ENCODE measurements at regions of chr1 and their contacts with region 1.

Region 1: GRCh38 chr1:91529856-91530255 is 29.2 kb downstream of the CDC7 start:
- DNase-seq: no peak
- H3K4me3 ChIP-seq: no peak overlapping the region
- H3K27ac ChIP-seq: no peak overlapping the region
- H3K4me1 ChIP-seq: no peaks in the 10 kb centered on the region
- H3K27me3 ChIP-seq: no peaks in the 10 kb centered on the region
- CTCF ChIP-seq: peak in 1 of 4 experiments; percentile 42
- POLR2A ChIP-seq: no peak

Region 2: DNA sequence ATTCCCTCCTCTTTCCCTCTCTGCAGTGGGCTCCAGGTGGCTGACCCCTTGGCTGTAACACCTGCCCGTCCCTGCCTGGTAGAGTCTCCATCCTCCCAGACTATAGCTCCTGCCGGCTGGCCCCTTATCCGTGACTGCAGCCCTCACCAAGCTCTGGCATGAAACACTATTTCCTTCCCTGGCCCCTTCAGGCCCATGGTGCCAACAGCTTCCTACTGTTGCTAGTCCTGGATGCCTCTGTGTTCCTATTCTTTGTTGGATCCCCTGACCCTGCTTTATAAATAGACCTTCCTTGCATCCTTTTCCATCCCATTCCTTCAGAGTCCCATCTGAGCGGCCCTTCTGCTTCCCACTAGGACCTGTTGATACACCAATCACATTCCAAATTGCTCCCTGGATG is 1340.0 kb before region 1 on chr1:
- intact Hi-C with region 1: no loop called
- DNase-seq: no peak
- H3K4me3 ChIP-seq: no peak overlapping the region
- H3K27ac ChIP-seq: no peak overlapping the region
- H3K4me1 ChIP-seq: no peaks in the 10 kb centered on the region
- H3K27me3 ChIP-seq: no peaks in the 10 kb centered on the region
- CTCF ChIP-seq: no peak
- POLR2A ChIP-seq: no peak

Region 3: GRCh38 chr1:91244737-91245136 is 285.1 kb before region 1 on chr1:
- intact Hi-C with region 1: no loop called
- DNase-seq: no peak
- H3K4me3 ChIP-seq: no peak overlapping the region
- H3K27ac ChIP-seq: no peak overlapping the region
- H3K4me1 ChIP-seq: no peaks in the 10 kb centered on the region
- H3K27me3 ChIP-seq: no peaks in the 10 kb centered on the region
- CTCF ChIP-seq: no peak
- POLR2A ChIP-seq: no peak

Region 4: GRCh38 chr1:91700332-91700731 is 170.5 kb after region 1 on chr1:
- intact Hi-C with region 1: loop called (anchors 10 kb)
- DNase-seq: no peak
- H3K4me3 ChIP-seq: no peak overlapping the region
- H3K27ac ChIP-seq: no peak overlapping the region
- H3K4me1 ChIP-seq: no peaks in the 10 kb centered on the region
- H3K27me3 ChIP-seq: no peaks in the 10 kb centered on the region
- CTCF ChIP-seq: no peak
- POLR2A ChIP-seq: no peak

Measured in prostate gland (tissue), 2 donors.